ENCODE measurements at regions of chr1 and their contacts with region 1.

Region 1: DNA sequence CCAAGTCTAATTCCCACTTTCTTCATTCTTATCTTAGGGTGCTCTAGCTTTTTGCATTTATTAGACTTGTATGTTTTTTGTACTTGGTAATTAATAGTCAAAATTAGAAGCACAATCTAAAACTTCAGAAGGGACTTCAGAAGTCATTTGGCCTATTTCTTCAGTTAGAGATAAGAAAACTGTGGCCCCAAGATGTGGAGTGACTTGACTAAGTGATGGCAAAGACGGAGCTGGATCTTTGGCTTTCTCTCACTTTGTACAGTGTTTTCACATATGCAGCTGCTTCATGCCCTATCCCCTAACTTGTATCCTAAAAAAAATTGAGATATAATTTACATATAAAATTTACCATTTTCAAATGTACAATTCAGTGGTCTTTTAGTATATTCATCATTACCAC is 21.7 kb downstream of the EPB41 start:
- DNase-seq: no peak
- H3K27ac ChIP-seq: no peak overlapping the region
- CTCF ChIP-seq: no peak

Region 2: GRCh38 chr1:28950006-28950405 is 13.9 kb after region 1 on chr1:
- CTCF ChIA-PET with region 1: interaction called, 10 read pairs
- POLR2A ChIA-PET with region 1: no interaction called
- DNase-seq: no peak
- H3K27ac ChIP-seq: no peak overlapping the region
- CTCF ChIP-seq: no peak

Measured in RWPE1 (cell line).